CD8-positive, alpha-beta T cell (primary cell): ENCODE measurements at regions of chr6 and their contacts with region 1.

Region 1: GRCh38 chr6:30357678-30358540 is 13.0 kb downstream of the RPP21 start:
- DNase-seq: peak in 8 of 9 experiments; percentile 16 to 81 (median 56)
- ATAC-seq: peak; percentile 88
- H3K4me3 ChIP-seq: peak overlapping the region; percentile 41 to 47
- H3K4me3 Mint-ChIP-seq: peak overlapping the region; percentile 87
- H3K27ac ChIP-seq: no peak overlapping the region
- H3K27ac Mint-ChIP-seq: no peak overlapping the region
- H3K4me1 ChIP-seq: peaks cover 4% of the 10 kb centered on the region
- H3K4me1 Mint-ChIP-seq: peaks cover 4% of the 10 kb centered on the region
- H3K27me3 ChIP-seq: peaks cover 0 to 10% of the 10 kb centered on the region in 2 experiments
- H3K27me3 Mint-ChIP-seq: peaks cover 46% of the 10 kb centered on the region
- CTCF ChIP-seq: peak; percentile 68

Region 2: GRCh38 chr6:29216528-29216927 is 1141.4 kb before region 1 on chr6:
- CTCF ChIA-PET with region 1: no interaction called
- POLR2A ChIA-PET with region 1: no interaction called
- intact Hi-C with region 1: no loop called
- DNase-seq: no peak
- ATAC-seq: no peak
- H3K4me3 ChIP-seq: no peak overlapping the region
- H3K4me3 Mint-ChIP-seq: no peak overlapping the region
- H3K27ac ChIP-seq: no peak overlapping the region
- H3K27ac Mint-ChIP-seq: no peak overlapping the region
- H3K4me1 ChIP-seq: no peaks in the 10 kb centered on the region
- H3K4me1 Mint-ChIP-seq: no peaks in the 10 kb centered on the region
- H3K27me3 ChIP-seq: no peaks in the 10 kb centered on the region
- H3K27me3 Mint-ChIP-seq: peaks cover 31% of the 10 kb centered on the region
- CTCF ChIP-seq: no peak

Region 3: GRCh38 chr6:30396833-30397479 is 39.0 kb after region 1 on chr6:
- CTCF ChIA-PET with region 1: interaction called, 23 read pairs
- POLR2A ChIA-PET with region 1: no interaction called
- intact Hi-C with region 1: loop called (anchors 1 kb)
- DNase-seq: peak; percentile 65 to 92 (median 87)
- ATAC-seq: peak; percentile 99
- H3K4me3 ChIP-seq: no peak overlapping the region
- H3K4me3 Mint-ChIP-seq: no peak overlapping the region
- H3K27ac ChIP-seq: no peak overlapping the region
- H3K27ac Mint-ChIP-seq: no peak overlapping the region
- H3K4me1 ChIP-seq: peaks cover 4% of the 10 kb centered on the region
- H3K4me1 Mint-ChIP-seq: peaks cover 4% of the 10 kb centered on the region
- H3K27me3 ChIP-seq: peaks cover 0 to 10% of the 10 kb centered on the region in 2 experiments
- H3K27me3 Mint-ChIP-seq: peaks cover 26% of the 10 kb centered on the region
- CTCF ChIP-seq: peak; percentile 94

Region 4: GRCh38 chr6:30443657-30444450 is 85.9 kb after region 1 on chr6:
- CTCF ChIA-PET with region 1: no interaction called
- POLR2A ChIA-PET with region 1: no interaction called
- intact Hi-C with region 1: no loop called
- DNase-seq: peak in 2 of 9 experiments; percentile 29 to 36
- ATAC-seq: no peak
- H3K4me3 ChIP-seq: no peak overlapping the region
- H3K4me3 Mint-ChIP-seq: no peak overlapping the region
- H3K27ac ChIP-seq: no peak overlapping the region
- H3K27ac Mint-ChIP-seq: no peak overlapping the region
- H3K4me1 ChIP-seq: no peaks in the 10 kb centered on the region
- H3K4me1 Mint-ChIP-seq: peaks cover 7% of the 10 kb centered on the region
- H3K27me3 ChIP-seq: peaks cover 37 to 53% of the 10 kb centered on the region in 2 experiments
- H3K27me3 Mint-ChIP-seq: peaks cover 71% of the 10 kb centered on the region
- CTCF ChIP-seq: no peak

Region 5: DNA sequence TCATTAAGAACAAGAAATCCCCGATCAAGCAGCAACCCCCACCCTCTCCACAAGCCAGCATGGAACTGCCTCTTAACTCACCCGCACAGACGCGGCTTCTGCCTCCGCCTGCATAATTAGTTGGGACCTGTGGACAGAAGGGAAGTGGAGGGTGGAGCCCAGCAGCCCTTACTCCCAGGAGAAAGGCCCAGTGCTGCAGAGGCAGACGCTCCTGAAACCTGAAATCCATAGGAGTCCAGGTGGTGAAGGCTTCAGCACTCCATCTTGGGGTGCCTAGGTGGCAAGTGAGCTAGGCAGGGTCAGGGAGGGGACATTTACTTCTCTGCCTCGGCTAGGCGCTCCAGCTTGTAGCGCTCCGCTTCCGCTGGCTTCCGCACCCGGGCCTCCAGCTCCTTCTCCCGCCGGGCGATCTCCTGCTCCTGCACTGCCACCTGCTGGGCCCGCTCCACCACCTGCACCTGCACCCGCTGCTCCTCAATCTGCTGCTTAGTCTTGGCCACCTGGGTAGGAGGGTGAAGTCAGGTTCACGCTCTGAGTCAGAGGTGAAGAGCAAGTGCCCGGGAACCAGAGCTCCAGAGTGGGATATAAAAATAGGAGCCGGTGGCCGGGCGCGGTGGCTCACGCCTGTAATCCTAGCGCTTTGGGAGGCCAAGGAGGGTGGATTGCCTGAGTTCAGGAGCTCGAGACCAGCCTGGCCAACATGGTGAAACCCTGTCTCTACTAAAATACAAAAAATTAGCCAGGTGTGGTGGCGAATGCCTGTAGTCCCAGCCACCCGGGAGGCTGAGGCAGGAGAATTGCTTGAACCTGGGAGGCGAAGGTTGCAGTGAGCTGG is 372.9 kb after region 1 on chr6:
- CTCF ChIA-PET with region 1: interaction called, 3 read pairs
- POLR2A ChIA-PET with region 1: no interaction called
- intact Hi-C with region 1: loop called in 1 of 2 experiments (anchors 10 kb)
- DNase-seq: peak; percentile 67 to 91 (median 85)
- ATAC-seq: peak; percentile 98
- H3K4me3 ChIP-seq: peak overlapping the region in 1 of 2 experiments; percentile 21
- H3K4me3 Mint-ChIP-seq: peak overlapping the region; percentile 47
- H3K27ac ChIP-seq: no peak overlapping the region
- H3K27ac Mint-ChIP-seq: no peak overlapping the region
- H3K4me1 ChIP-seq: peaks cover 29% of the 10 kb centered on the region
- H3K4me1 Mint-ChIP-seq: peaks cover 37% of the 10 kb centered on the region
- H3K27me3 ChIP-seq: no peaks in the 10 kb centered on the region
- H3K27me3 Mint-ChIP-seq: no peaks in the 10 kb centered on the region
- CTCF ChIP-seq: peak; percentile 67

Region 6: DNA sequence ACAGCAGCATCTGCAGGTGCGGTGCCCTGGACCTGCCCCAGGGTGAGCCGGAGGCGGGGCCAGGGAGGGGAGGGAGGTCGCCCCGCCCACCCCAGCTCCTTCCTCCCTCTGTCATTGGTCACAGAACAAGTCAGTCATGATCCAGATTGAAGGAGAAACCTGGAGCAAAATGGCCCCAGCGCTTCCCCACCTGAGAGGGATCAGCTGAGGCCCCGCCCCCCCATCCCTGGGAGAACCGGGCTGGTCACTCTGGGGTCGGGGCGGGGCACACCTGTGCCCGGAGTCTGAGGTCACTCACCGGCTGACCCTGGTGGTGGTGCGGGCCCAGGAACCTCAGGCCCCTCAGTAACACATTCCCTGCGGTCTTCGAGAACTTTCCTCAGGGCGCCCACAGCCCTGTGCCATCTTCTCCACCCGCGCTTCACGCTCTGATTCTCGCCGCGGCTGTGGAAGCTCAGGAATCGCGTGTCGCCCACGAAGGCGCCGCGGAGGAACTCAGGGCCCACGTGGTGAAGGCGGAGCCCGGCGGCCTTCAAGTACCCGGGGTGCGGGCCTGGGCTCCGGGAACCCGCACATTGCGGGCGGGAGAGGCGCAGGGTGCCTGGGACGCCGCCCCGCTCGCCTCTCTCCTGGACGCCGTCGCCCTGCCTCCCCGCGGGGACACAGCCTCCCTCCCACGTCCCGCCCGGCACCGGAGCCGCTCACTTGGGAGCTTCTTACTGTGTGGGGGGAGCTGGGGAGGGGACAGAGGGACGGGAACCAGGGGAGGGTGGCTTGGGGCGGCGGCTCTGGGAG is 950.3 kb after region 1 on chr6:
- CTCF ChIA-PET with region 1: no interaction called
- POLR2A ChIA-PET with region 1: no interaction called
- intact Hi-C with region 1: no loop called
- DNase-seq: peak; percentile 48 to 86 (median 69)
- ATAC-seq: peak; percentile 95
- H3K4me3 ChIP-seq: peak overlapping the region; percentile 64 to 74
- H3K4me3 Mint-ChIP-seq: peak overlapping the region; percentile 85
- H3K27ac ChIP-seq: peak overlapping the region in 1 of 2 experiments; percentile 27
- H3K27ac Mint-ChIP-seq: peak overlapping the region; percentile 77
- H3K4me1 ChIP-seq: peaks cover 9% of the 10 kb centered on the region
- H3K4me1 Mint-ChIP-seq: peaks cover 7% of the 10 kb centered on the region
- H3K27me3 ChIP-seq: no peaks in the 10 kb centered on the region
- H3K27me3 Mint-ChIP-seq: no peaks in the 10 kb centered on the region
- CTCF ChIP-seq: no peak